ENCODE measurements at regions of chr3 and their contacts with region 1.

Region 1: DNA sequence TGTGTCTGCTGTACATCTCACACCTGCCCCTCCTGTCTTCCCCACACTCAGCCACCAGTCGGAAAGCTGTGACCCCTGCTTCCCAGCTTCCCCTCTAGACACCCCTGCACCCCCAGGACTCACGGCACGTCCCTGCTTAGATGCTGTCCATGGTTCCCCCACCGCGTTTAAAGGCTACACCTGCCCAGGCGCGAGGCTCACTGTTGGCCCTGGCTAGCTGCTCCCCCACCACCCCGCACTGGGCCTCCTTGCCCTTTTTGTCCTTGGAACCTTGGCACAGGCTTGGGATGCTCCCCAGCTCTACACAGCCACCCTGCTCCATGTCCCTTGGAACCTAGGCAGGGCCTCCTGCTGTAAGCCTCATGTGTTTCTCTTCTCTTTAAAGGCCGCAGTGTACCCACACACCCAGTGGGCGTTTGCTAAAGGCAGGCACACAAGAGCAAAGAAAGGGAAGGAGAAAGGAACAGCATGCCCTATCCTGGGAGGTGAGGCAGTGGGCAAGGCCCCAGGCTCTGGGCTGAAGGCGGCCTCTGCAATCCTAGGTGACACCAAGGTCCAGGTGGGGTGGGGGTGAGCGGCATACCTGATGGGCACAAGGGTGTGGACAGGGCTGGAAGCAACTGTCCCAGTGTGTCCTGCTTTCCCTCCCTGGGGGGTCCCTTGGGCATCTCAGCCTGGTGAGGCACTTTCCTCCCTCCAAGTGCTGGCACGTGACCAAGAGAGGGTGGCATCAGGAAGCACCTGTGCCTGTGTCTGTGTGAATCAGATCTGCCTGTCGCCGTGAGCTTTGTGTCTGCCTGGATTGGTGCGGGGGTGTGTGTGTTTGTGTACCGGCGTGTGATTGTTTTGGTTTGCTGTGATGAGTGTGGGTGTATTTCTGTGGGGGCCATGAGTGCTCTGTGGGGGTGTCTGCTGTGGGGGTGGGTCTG is 54.4 kb downstream of the TPRA1 start:
- DNase-seq: no peak
- H3K4me3 ChIP-seq: no peak overlapping the region
- H3K27ac ChIP-seq: no peak overlapping the region
- H3K4me1 ChIP-seq: no peaks in the 10 kb centered on the region
- H3K27me3 ChIP-seq: no peaks in the 10 kb centered on the region
- CTCF ChIP-seq: no peak
- POLR2A ChIP-seq: no peak

Region 2: DNA sequence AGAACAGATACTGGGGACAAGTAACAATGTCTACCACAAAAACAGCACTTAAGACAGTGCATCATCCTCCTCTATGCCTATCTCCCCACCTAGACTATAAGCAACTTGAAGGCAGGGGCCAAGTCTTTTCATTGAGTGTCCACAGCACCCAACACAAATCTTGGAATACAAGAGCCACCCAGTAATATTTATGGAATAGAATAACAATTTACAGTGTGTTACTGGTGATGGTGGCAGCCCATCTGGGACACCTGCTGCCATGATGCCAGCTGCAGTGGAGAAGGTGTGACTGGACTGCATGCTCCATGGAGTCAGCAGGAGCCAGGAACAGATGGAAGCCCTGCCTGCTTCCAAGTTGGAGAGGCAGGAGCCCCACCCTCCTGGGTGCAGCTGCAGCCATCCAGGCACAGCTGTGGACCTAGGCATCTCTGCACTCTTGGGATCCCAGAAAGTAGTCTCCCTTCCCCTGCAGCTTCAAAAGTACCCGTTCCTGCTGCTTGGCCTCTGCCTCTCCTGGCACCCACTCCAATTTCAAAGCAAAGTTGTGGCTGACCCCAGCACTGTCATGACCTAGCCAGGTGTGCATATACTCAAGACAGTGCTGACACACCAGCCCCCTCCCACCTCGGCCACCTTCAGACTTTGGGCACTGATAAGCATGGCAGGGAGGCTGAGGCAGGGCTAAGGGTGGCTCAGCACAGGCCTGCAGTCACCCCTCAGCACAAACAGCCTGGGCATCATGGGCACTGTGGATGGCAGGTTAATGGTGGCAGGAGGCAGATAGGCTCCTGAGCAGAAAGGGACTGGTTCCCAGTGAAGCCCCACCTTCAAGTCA is 40.1 kb before region 1 on chr3:
- intact Hi-C with region 1: loop called (anchors 1 kb)
- DNase-seq: no peak
- H3K4me3 ChIP-seq: no peak overlapping the region
- H3K27ac ChIP-seq: no peak overlapping the region
- H3K4me1 ChIP-seq: no peaks in the 10 kb centered on the region
- H3K27me3 ChIP-seq: no peaks in the 10 kb centered on the region
- CTCF ChIP-seq: no peak
- POLR2A ChIP-seq: no peak

Region 3: GRCh38 chr3:127608362-127608718 is 72.2 kb after region 1 on chr3:
- intact Hi-C with region 1: no loop called
- DNase-seq: no peak
- H3K4me3 ChIP-seq: no peak overlapping the region
- H3K27ac ChIP-seq: no peak overlapping the region
- H3K4me1 ChIP-seq: no peaks in the 10 kb centered on the region
- H3K27me3 ChIP-seq: no peaks in the 10 kb centered on the region
- CTCF ChIP-seq: no peak
- POLR2A ChIP-seq: no peak

Measured in breast epithelium (tissue), 4 donors.